ENCODE measurements at regions of chr16 and their contacts with region 1.

Region 1: DNA sequence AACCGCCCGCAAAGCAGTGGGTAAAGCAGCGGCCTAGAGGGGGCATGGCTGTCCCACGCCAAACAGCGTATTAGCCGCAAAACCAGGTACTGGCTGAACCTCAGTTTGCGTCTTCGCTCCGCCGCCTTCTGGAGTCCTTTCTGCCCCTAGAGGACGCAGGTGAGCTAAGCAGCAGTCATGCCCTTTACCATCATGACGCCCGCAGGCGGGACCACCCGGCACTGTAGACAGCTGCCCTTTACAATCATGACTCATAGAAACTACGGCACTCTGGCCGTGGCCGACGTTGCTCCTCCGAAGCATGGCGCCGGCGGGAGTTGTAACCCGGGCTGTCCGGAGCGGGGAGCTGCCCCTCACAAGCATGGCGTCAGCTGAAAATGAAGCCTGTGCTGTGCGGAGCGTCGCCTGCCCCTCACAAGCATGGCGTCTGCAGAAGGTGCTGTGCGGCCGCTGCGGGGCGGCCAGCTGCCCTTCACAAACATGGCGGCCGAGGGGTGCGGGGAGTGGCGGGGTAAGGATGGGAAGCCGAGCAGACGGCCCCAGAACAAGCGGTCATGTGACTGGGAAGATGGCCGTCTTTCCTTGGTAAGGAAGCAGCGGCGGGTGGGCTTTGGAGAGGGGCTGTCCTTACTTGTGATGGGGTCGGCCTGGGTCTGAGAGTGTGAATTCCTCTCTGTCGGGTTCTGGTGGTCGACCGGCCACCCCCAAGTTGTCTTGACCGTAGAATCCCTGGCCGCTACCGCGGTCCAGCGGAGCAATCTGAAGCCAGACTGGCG is at the start of gene VPS35L:
- DNase-seq: peak; percentile 95 to 97 (median 96)
- H3K4me3 ChIP-seq: peak within 1 kb of the TSS; percentile 87
- H3K4me3 Mint-ChIP-seq: peak within 1 kb of the TSS; percentile 91 to 98 (median 96)
- H3K27ac ChIP-seq: peak within 1 kb of the TSS; percentile 73
- H3K27ac Mint-ChIP-seq: peak within 1 kb of the TSS; percentile 88 to 100 (median 96)
- H3K4me1 ChIP-seq: peaks cover 16% of the 10 kb centered on the region
- H3K4me1 Mint-ChIP-seq: peaks cover 25 to 32% (median 26%) of the 10 kb centered on the region in 3 donors
- H3K27me3 ChIP-seq: no peaks in the 10 kb centered on the region
- H3K27me3 Mint-ChIP-seq: no peaks in the 10 kb centered on the region
- total RNA-seq, gene VPS35L: 37.4 to 40.2 TPM

Region 2: DNA sequence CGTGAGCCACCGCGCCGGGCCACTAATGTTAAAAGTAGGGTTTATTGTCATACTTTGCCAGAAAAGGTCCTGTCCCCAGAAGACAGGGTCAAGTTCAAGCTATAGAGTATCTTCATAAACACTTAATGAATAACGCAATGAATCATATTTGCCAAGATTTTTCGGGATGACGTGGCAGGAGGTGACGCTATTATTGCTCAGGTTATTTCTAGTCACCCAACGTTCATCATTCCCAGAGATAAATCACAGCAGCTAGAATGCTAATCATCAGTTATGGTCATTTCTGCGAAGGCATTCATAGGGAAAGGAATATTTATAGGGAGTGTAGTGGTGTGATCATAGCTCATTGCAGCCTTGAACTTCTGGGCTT is 135.7 kb before region 1 on chr16:
- CTCF ChIA-PET with region 1: no interaction called
- POLR2A ChIA-PET with region 1: no interaction called
- DNase-seq: no peak
- H3K4me3 ChIP-seq: no peak overlapping the region
- H3K4me3 Mint-ChIP-seq: no peak overlapping the region
- H3K27ac ChIP-seq: no peak overlapping the region
- H3K27ac Mint-ChIP-seq: no peak overlapping the region
- H3K4me1 ChIP-seq: no peaks in the 10 kb centered on the region
- H3K4me1 Mint-ChIP-seq: no peaks in the 10 kb centered on the region
- H3K27me3 ChIP-seq: no peaks in the 10 kb centered on the region
- H3K27me3 Mint-ChIP-seq: peaks cover 7 to 13% of the 10 kb centered on the region in 2 donors

Region 3: DNA sequence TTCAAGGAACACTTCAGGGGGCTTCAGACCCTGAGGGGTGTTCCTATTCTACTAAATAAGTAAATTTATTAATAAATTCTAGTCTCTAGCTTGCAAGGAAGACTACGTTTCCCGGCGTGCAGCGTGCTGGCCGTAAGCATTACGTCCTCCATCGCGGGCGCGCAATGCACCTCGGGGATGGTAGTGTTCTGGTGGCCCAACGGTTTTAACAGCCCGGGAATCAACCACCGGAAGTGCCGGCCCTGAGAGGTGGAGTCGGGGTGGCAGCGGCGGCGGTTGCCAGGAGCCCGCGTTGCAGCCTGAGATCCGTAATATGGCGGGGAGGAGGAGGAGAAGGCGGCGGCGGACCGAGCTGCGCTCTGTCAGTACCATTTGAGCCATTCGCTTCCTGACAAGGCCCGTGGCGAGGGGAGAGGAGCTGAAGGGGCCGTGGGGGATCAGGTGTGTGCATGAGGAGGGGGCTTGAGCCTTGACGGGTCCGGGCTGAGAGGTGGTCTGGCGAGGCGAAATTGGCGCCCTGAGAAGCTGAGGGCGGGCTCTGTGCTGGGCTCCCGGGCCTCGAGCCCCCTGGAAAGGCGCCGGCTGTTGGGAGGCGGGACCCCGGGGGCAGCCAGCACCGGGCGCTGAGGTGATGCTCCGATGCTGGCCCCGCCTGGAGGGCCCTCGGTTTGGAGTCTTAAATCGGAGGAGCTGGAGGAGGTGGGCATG is 31.5 kb before region 1 on chr16 and contains the start of gene CCP110:
- CTCF ChIA-PET with region 1: interaction called, 25 read pairs
- POLR2A ChIA-PET with region 1: interaction called, 26 read pairs
- DNase-seq: peak; percentile 91 to 96 (median 91)
- H3K4me3 ChIP-seq: peak within 1 kb of the TSS; percentile 84
- H3K4me3 Mint-ChIP-seq: peak within 1 kb of the TSS; percentile 93 to 100 (median 97)
- H3K27ac ChIP-seq: peak within 1 kb of the TSS; percentile 66
- H3K27ac Mint-ChIP-seq: peak within 1 kb of the TSS; percentile 85 to 99 (median 96)
- H3K4me1 ChIP-seq: peaks cover 37% of the 10 kb centered on the region
- H3K4me1 Mint-ChIP-seq: peaks cover 40 to 64% (median 58%) of the 10 kb centered on the region in 3 donors
- H3K27me3 ChIP-seq: no peaks in the 10 kb centered on the region
- H3K27me3 Mint-ChIP-seq: no peaks in the 10 kb centered on the region
- total RNA-seq, gene CCP110: 30.1 to 37.4 TPM

Region 4: GRCh38 chr16:19542138-19542821 is 13.1 kb before region 1 on chr16:
- CTCF ChIA-PET with region 1: interaction called, 15 read pairs
- POLR2A ChIA-PET with region 1: no interaction called
- DNase-seq: no peak
- H3K4me3 ChIP-seq: no peak overlapping the region
- H3K4me3 Mint-ChIP-seq: no peak overlapping the region
- H3K27ac ChIP-seq: no peak overlapping the region
- H3K27ac Mint-ChIP-seq: no peak overlapping the region
- H3K4me1 ChIP-seq: no peaks in the 10 kb centered on the region
- H3K4me1 Mint-ChIP-seq: no peaks in the 10 kb centered on the region
- H3K27me3 ChIP-seq: no peaks in the 10 kb centered on the region
- H3K27me3 Mint-ChIP-seq: no peaks in the 10 kb centered on the region

Region 5: GRCh38 chr16:19710191-19710908 is 155.0 kb after region 1 on chr16:
- CTCF ChIA-PET with region 1: no interaction called
- POLR2A ChIA-PET with region 1: no interaction called
- DNase-seq: no peak
- H3K4me3 ChIP-seq: no peak overlapping the region
- H3K4me3 Mint-ChIP-seq: no peak overlapping the region
- H3K27ac ChIP-seq: no peak overlapping the region
- H3K27ac Mint-ChIP-seq: peak overlapping the region in 1 of 8 donors; percentile 33
- H3K4me1 ChIP-seq: no peaks in the 10 kb centered on the region
- H3K4me1 Mint-ChIP-seq: peaks cover 14 to 27% (median 18%) of the 10 kb centered on the region in 3 donors
- H3K27me3 ChIP-seq: no peaks in the 10 kb centered on the region
- H3K27me3 Mint-ChIP-seq: no peaks in the 10 kb centered on the region

Region 6: GRCh38 chr16:19886073-19886941 is 331.0 kb after region 1 on chr16:
- CTCF ChIA-PET with region 1: interaction called, 19 read pairs
- POLR2A ChIA-PET with region 1: no interaction called
- DNase-seq: peak; percentile 60 to 79 (median 65)
- H3K4me3 ChIP-seq: peak overlapping the region; percentile 28
- H3K4me3 Mint-ChIP-seq: peak overlapping the region; percentile 79 to 96 (median 84)
- H3K27ac ChIP-seq: no peak overlapping the region
- H3K27ac Mint-ChIP-seq: peak overlapping the region in 6 of 8 donors; percentile 15 to 67 (median 26)
- H3K4me1 ChIP-seq: peaks cover 24% of the 10 kb centered on the region
- H3K4me1 Mint-ChIP-seq: peaks cover 20 to 36% (median 25%) of the 10 kb centered on the region in 3 donors
- H3K27me3 ChIP-seq: peaks cover 23% of the 10 kb centered on the region
- H3K27me3 Mint-ChIP-seq: peaks cover 24 to 34% of the 10 kb centered on the region in 2 donors